ENCODE measurements at regions of chr13 and their contacts with region 1.

Region 1: GRCh38 chr13:35210261-35210660 is 266.2 kb downstream of the MAB21L1 start:
- ATAC-seq: no peak
- H3K4me3 ChIP-seq: no peak overlapping the region
- H3K27ac ChIP-seq: no peak overlapping the region
- H3K4me1 ChIP-seq: no peaks in the 10 kb centered on the region

Region 2: DNA sequence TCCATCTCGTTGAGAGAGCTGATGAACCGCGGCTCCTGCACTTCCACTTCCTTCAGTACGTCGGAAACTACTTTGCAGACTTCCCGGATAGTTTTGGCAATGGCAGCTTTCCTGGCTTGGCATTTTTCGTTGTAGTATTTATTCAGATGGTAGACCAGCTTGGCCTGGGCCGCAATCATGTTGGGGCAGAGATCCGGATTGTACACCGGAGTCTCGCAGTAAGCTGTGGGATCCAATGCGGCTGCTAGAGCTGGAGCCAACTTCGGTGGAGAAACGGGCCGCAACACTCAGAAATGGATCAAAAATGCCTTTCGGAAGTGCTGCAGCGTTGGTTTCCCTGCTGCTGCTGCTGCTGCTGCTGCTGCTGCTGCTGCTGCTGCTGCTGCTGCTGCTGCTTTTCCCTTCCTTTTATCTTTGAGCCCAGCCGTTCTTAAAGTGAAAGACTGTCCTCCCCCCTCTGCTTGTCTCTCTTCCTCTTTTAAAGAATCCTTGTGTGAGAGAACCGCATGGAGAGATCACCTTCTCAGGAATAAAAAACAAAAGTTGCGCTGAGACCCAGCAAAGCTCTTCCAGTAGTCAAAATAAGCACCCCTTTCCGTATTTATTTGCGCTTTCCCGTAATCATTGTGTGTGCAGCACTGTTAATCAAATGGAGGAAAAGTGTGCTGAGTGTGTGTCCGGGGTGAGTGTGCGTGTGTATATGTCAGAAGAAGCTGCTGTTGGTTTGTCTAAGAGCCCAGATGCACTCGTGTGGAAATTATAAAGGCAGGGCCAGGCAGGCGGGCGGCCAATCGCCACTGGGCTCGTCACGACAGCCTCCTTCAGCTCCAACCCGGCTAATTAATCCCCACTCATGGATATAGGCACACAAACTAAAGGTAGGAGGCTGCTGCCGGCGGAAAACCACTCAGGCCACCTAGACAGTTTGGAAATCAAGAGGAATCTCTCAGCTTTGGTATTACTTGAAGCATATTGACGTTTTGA is 266.0 kb after region 1 on chr13 and contains the start of gene MAB21L1:
- in situ Hi-C with region 1: loop called in 1 of 9 experiments (anchors 25 kb)
- ATAC-seq: peak in 7 of 8 experiments; percentile 13 to 69 (median 50)
- H3K4me3 ChIP-seq: peak within 1 kb of the TSS in 2 of 5 donors; percentile 5 to 17
- H3K27ac ChIP-seq: no peak within 1 kb of the TSS
- H3K4me1 ChIP-seq: peaks cover 5 to 6% of the 10 kb centered on the region in 2 donors
- total RNA-seq, gene MAB21L1: 0.31 to 1.5 (median 0.86) TPM

Region 3: GRCh38 chr13:35720690-35721554 is 510.7 kb after region 1 on chr13:
- in situ Hi-C with region 1: loop called in 2 of 9 experiments (anchors 25 kb)
- ATAC-seq: peak; percentile 56 to 95 (median 74)
- H3K4me3 ChIP-seq: no peak overlapping the region
- H3K27ac ChIP-seq: no peak overlapping the region
- H3K4me1 ChIP-seq: no peaks in the 10 kb centered on the region